Lower lobe of right lung (tissue), 2 donors: ENCODE measurements at regions of chr3 and their contacts with region 1.

Region 1: GRCh38 chr3:172065967-172066762 is 26.8 kb downstream of the FNDC3B start:
- DNase-seq: no peak
- ATAC-seq: peak in 1 of 2 donors; percentile 55
- H3K4me3 ChIP-seq: no peak overlapping the region
- H3K27ac ChIP-seq: no peak overlapping the region
- H3K4me1 ChIP-seq: peaks cover 90% of the 10 kb centered on the region
- H3K27me3 ChIP-seq: no peaks in the 10 kb centered on the region
- CTCF ChIP-seq: no peak

Region 2: GRCh38 chr3:171809821-171810628 is 256.1 kb before region 1 on chr3 and contains the start of gene PLD1:
- intact Hi-C with region 1: no loop called
- DNase-seq: peak; percentile 91
- ATAC-seq: peak; percentile 94 to 95
- H3K4me3 ChIP-seq: peak within 1 kb of the TSS; percentile 60
- H3K27ac ChIP-seq: peak within 1 kb of the TSS; percentile 87
- H3K4me1 ChIP-seq: peaks cover 44% of the 10 kb centered on the region
- H3K27me3 ChIP-seq: no peaks in the 10 kb centered on the region
- CTCF ChIP-seq: no peak
- total RNA-seq, gene PLD1: 27.7 TPM

Region 3: DNA sequence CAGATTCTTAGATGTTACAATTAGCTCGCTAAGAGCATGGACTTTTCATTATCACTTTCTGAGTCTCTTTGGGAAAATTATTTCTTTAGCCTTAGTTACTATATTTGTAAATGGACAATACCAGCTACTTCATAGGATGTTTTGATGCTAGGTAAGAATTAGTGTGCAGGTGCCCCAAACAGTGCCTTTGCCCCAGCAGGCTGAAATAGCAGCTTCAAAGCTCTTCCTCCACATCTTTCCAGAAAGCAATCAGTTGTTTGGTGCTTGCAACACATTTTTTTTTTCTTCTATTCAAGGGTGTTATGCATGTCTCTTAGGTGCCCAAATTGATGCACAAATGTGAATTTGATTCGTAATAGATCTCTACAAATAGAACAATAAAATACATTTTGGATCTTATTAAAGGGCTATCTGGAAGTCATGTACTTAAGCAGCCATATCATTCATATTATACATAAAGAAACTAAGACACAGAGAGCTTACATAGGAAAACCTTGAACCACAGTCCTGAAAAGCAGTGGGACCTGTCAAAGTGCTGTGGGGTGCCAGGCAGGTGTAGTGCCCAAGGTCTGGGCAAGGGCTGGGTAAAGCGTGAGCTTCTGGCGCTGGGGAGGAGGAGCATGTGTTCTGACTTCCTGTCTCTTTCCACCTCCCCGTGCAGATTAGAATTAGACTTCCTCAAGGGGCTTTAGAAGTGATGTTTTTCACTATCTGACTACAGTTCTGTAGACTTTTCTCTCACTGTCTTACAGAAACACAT is 36.1 kb after region 1 on chr3:
- intact Hi-C with region 1: loop called (anchors 5 kb)
- DNase-seq: no peak
- ATAC-seq: peak; percentile 39 to 54
- H3K4me3 ChIP-seq: no peak overlapping the region
- H3K27ac ChIP-seq: peak overlapping the region; percentile 59
- H3K4me1 ChIP-seq: peaks cover 97% of the 10 kb centered on the region
- H3K27me3 ChIP-seq: no peaks in the 10 kb centered on the region
- CTCF ChIP-seq: no peak